GM10248 (cell line): ENCODE measurements at regions of chr12 and their contacts with region 1.

Region 1: GRCh38 chr12:54579696-54580333 is 8.6 kb downstream of the PPP1R1A start:
- DNase-seq: peak; percentile 88
- CTCF ChIP-seq: peak; percentile 99

Region 2: DNA sequence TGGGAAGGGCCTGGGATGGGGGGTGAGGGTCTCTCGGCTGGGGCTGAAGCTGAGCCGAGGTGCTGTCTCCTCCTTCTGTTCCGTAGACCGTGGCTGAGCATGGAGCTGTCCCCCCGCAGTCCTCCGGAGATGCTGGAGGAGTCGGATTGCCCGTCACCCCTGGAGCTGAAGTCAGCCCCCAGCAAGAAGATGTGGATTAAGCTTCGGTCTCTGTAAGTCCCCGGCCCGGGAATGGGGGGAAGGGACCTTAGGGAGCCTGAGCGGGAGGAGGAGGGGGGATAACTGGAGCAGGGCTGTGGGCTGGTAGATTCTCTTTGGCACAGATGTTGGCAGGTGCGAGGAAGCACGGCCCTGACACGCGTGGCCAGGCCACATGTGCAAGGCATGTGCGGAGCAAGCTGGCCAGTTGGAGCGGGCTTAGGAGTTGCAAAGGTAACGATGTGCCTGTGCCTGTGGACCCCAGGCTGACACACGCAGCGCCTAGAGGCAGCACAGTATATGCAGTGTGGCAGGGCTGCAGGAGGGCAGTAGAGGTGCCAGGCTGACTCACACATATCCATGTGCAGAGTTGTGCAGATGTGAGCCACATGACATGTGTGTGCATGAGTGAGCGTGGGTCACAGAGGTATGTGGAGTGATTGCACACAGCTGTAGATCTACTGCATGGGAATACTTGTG is 29.9 kb before region 1 on chr12:
- CTCF ChIA-PET with region 1: interaction called, 11 read pairs
- POLR2A ChIA-PET with region 1: no interaction called
- DNase-seq: no peak
- CTCF ChIP-seq: no peak

Region 3: DNA sequence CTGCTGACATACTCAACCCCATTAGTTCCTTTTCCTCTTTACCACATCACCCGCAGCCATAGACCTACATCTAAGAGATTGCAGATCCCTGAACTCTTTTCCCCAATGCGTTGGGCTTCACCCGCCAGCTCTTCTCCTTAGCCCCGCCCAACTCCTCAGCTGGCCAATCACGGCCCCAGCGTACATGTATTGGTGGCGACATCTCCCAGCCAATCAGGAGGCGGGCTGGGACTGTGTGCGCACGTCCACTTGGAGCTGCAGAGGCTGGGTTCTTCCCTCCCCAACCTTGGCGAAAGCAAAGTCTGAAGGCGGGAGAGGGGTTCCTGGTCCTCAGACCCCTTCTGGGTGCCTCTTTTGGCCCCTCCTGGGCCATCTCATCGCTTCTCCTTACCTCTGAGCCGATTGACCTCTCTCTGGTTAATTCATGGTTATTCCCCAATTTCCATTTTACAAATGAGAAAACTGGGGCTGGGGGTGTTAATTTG is 19.4 kb before region 1 on chr12:
- CTCF ChIA-PET with region 1: interaction called, 87 read pairs
- POLR2A ChIA-PET with region 1: no interaction called
- DNase-seq: peak; percentile 94
- CTCF ChIP-seq: no peak

Region 4: DNA sequence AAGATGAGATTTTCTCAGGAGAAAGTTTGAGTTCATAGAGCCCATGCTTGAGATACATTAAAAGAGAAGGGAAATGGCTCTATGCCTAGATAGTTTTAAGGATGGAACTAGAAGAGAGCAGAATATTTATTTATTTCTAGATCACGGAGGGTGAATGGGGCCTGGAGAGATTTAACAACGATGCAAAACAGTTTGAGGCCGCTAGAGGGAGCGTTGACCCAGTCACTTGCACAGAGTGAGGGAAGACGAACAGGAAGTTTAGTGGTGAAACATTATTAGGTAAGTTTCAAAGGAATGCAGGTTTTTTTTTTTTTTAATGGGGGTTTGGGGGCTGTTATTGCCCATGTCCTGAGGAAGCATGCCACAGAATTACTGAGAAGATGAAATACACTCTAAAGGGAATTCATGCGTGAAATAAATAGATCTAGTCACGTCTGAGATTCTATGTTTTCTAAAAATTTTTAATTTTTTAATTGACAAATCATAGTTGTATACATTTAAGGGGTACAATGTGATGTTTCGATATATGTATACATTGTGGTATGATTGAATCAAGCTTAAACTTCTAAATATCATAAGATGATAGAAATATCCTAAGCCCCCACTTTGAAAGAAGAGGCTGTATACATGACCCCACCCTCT is 23.5 kb after region 1 on chr12:
- CTCF ChIA-PET with region 1: interaction called, 84 read pairs
- POLR2A ChIA-PET with region 1: no interaction called
- DNase-seq: peak; percentile 78
- CTCF ChIP-seq: peak; percentile 77